Caco-2 (cell line): ENCODE measurements at regions of chr17 and their contacts with region 1.

Region 1: GRCh38 chr17:59914274-59914854 is 21.4 kb downstream of the RPS6KB1 start:
- DNase-seq: peak in 1 of 2 experiments; percentile 50
- H3K4me3 ChIP-seq: no peak overlapping the region
- H3K4me3 Mint-ChIP-seq: no peak overlapping the region
- H3K27ac Mint-ChIP-seq: no peak overlapping the region
- H3K4me1 ChIP-seq: no peaks in the 10 kb centered on the region
- H3K4me1 Mint-ChIP-seq: no peaks in the 10 kb centered on the region
- H3K27me3 ChIP-seq: no peaks in the 10 kb centered on the region
- H3K27me3 Mint-ChIP-seq: no peaks in the 10 kb centered on the region
- CTCF ChIP-seq: peak; percentile 43 to 58

Region 2: GRCh38 chr17:60036796-60037612 is 122.6 kb after region 1 on chr17:
- CTCF ChIA-PET with region 1: interaction called, 10 read pairs
- POLR2A ChIA-PET with region 1: no interaction called
- intact Hi-C with region 1: loop called (anchors 5 kb)
- DNase-seq: peak; percentile 78 to 82
- H3K4me3 ChIP-seq: no peak overlapping the region
- H3K4me3 Mint-ChIP-seq: no peak overlapping the region
- H3K27ac Mint-ChIP-seq: no peak overlapping the region
- H3K4me1 ChIP-seq: no peaks in the 10 kb centered on the region; the same call in 1 of the 2 replicates
- H3K4me1 Mint-ChIP-seq: no peaks in the 10 kb centered on the region
- H3K27me3 ChIP-seq: no peaks in the 10 kb centered on the region
- H3K27me3 Mint-ChIP-seq: peaks cover 3% of the 10 kb centered on the region
- CTCF ChIP-seq: peak; percentile 89 to 97

Region 3: GRCh38 chr17:60315650-60316049 is 401.3 kb after region 1 on chr17:
- CTCF ChIA-PET with region 1: no interaction called
- POLR2A ChIA-PET with region 1: no interaction called
- intact Hi-C with region 1: no loop called
- DNase-seq: no peak
- H3K4me3 ChIP-seq: no peak overlapping the region
- H3K4me3 Mint-ChIP-seq: no peak overlapping the region
- H3K27ac Mint-ChIP-seq: no peak overlapping the region
- H3K4me1 ChIP-seq: no peaks in the 10 kb centered on the region
- H3K4me1 Mint-ChIP-seq: no peaks in the 10 kb centered on the region
- H3K27me3 ChIP-seq: no peaks in the 10 kb centered on the region
- H3K27me3 Mint-ChIP-seq: no peaks in the 10 kb centered on the region
- CTCF ChIP-seq: no peak